ENCODE measurements at regions of chr1 and their contacts with region 1.

Region 1: GRCh38 chr1:31216016-31216415 is 23.7 kb downstream of the NKAIN1 start:
- DNase-seq: no peak
- H3K4me3 ChIP-seq: no peak overlapping the region
- H3K27ac ChIP-seq: no peak overlapping the region
- H3K4me1 ChIP-seq: peaks cover 0 to 9% (median 2%) of the 10 kb centered on the region in 4 experiments; a peak in 5 of 7 replicates
- H3K27me3 ChIP-seq: no peaks in the 10 kb centered on the region
- CTCF ChIP-seq: no peak
- EP300 ChIP-seq: no peak
- POLR2A ChIP-seq: no peak
- RAD21 ChIP-seq: no peak

Region 2: GRCh38 chr1:31189696-31190674 is 26.0 kb before region 1 on chr1:
- CTCF ChIA-PET with region 1: interaction called, 53 read pairs
- POLR2A ChIA-PET with region 1: no interaction called
- DNase-seq: no peak
- H3K4me3 ChIP-seq: no peak overlapping the region
- H3K27ac ChIP-seq: no peak overlapping the region
- H3K4me1 ChIP-seq: peaks cover 0 to 3% (median 0%) of the 10 kb centered on the region in 4 experiments; a peak in 2 of 7 replicates
- H3K27me3 ChIP-seq: no peaks in the 10 kb centered on the region
- CTCF ChIP-seq: no peak
- EP300 ChIP-seq: no peak
- POLR2A ChIP-seq: no peak
- RAD21 ChIP-seq: no peak

Region 3: GRCh38 chr1:31259746-31260145 is 43.7 kb after region 1 on chr1:
- CTCF ChIA-PET with region 1: no interaction called
- POLR2A ChIA-PET with region 1: no interaction called
- DNase-seq: no peak
- H3K4me3 ChIP-seq: no peak overlapping the region
- H3K27ac ChIP-seq: no peak overlapping the region
- H3K4me1 ChIP-seq: no peaks in the 10 kb centered on the region
- H3K27me3 ChIP-seq: no peaks in the 10 kb centered on the region
- CTCF ChIP-seq: no peak
- EP300 ChIP-seq: no peak
- POLR2A ChIP-seq: no peak
- RAD21 ChIP-seq: no peak

Region 4: DNA sequence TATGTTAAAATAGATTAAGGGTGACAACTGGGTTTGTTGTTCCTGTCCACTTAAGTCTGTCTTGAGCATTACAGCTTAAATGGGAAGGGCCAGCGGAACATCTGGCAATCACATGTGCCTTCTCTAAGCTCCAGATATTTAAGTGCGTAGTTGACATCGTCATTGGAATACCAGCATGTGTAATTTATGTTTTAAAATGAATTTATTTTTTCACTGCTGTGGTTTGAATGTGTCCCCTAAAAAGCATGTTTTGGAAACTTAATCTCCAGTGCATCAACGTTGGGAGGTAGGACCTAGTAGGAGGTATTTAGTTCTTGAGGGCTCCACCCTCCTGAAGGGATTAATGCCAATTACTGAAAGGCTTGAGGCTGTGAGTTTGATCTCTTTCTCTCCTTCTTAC is 94.2 kb after region 1 on chr1:
- CTCF ChIA-PET with region 1: no interaction called
- POLR2A ChIA-PET with region 1: no interaction called
- DNase-seq: no peak
- H3K4me3 ChIP-seq: no peak overlapping the region
- H3K27ac ChIP-seq: no peak overlapping the region
- H3K4me1 ChIP-seq: no peaks in the 10 kb centered on the region
- H3K27me3 ChIP-seq: no peaks in the 10 kb centered on the region
- CTCF ChIP-seq: no peak
- EP300 ChIP-seq: no peak
- POLR2A ChIP-seq: no peak
- RAD21 ChIP-seq: no peak

Measured in H1 (cell line).